Endothelial cell of umbilical vein (primary cell): ENCODE measurements at regions of chr10 and their contacts with region 1.

Region 1: GRCh38 chr10:3619241-3619640 is 165.8 kb downstream of the KLF6 start:
- DNase-seq: no peak
- H3K4me3 ChIP-seq: no peak overlapping the region
- H3K27ac ChIP-seq: no peak overlapping the region
- H3K4me1 ChIP-seq: no peaks in the 10 kb centered on the region
- H3K27me3 ChIP-seq: peaks cover 2% of the 10 kb centered on the region in 2 experiments
- CTCF ChIP-seq: no peak
- POLR2A ChIP-seq: no peak

Region 2: GRCh38 chr10:3578159-3578558 is 41.1 kb before region 1 on chr10:
- CTCF ChIA-PET with region 1: no interaction called
- POLR2A ChIA-PET with region 1: no interaction called
- dilution Hi-C with region 1: no loop called
- intact Hi-C with region 1: loop called (anchors 1 kb)
- DNase-seq: no peak
- H3K4me3 ChIP-seq: no peak overlapping the region
- H3K27ac ChIP-seq: no peak overlapping the region
- H3K4me1 ChIP-seq: no peaks in the 10 kb centered on the region
- H3K27me3 ChIP-seq: peaks cover 2 to 6% of the 10 kb centered on the region in 2 experiments
- CTCF ChIP-seq: no peak
- POLR2A ChIP-seq: no peak